Posterior vena cava (tissue), 2 donors: ENCODE measurements at regions of chr11 and their contacts with region 1.

Region 1: GRCh38 chr11:96627379-96627778 is 237.6 kb downstream of the JRKL start:
- DNase-seq: no peak

Region 2: GRCh38 chr11:96694338-96694737 is 67.0 kb after region 1 on chr11:
- intact Hi-C with region 1: no loop called
- DNase-seq: no peak

Region 3: GRCh38 chr11:96905143-96905542 is 277.8 kb after region 1 on chr11:
- intact Hi-C with region 1: no loop called
- DNase-seq: no peak

Region 4: GRCh38 chr11:97136067-97136466 is 508.7 kb after region 1 on chr11:
- intact Hi-C with region 1: loop called in 1 of 2 experiments (anchors 5 kb)
- DNase-seq: no peak